Heart right ventricle (tissue), 16 donors: ENCODE measurements at regions of chr5 and their contacts with region 1.

Region 1: GRCh38 chr5:89147031-89147430 is 264.0 kb upstream of the MEF2C start:
- DNase-seq: no peak
- ATAC-seq: no peak
- H3K4me3 ChIP-seq: no peak overlapping the region
- H3K27ac ChIP-seq: no peak overlapping the region
- H3K4me1 ChIP-seq: no peaks in the 10 kb centered on the region
- H3K27me3 ChIP-seq: no peaks in the 10 kb centered on the region
- CTCF ChIP-seq: no peak

Region 2: GRCh38 chr5:89351232-89351631 is 204.2 kb after region 1 on chr5:
- intact Hi-C with region 1: loop called in 1 of 10 experiments (anchors 5 kb)
- DNase-seq: no peak
- ATAC-seq: no peak
- H3K4me3 ChIP-seq: no peak overlapping the region
- H3K27ac ChIP-seq: no peak overlapping the region
- H3K4me1 ChIP-seq: no peaks in the 10 kb centered on the region
- H3K27me3 ChIP-seq: no peaks in the 10 kb centered on the region
- CTCF ChIP-seq: no peak